Right ventricle myocardium inferior (tissue), 1 donor: ENCODE measurements at regions of chr1 and their contacts with region 1.

Region 1: GRCh38 chr1:2786329-2787162 is 14.9 kb downstream of the TTC34 start:
- DNase-seq: peak; percentile 75
- ATAC-seq: no peak

Region 2: GRCh38 chr1:2556277-2556677 is 230.3 kb before region 1 on chr1 and contains the start of gene TNFRSF14:
- intact Hi-C with region 1: loop called (anchors 5 kb)
- DNase-seq: peak; percentile 82
- ATAC-seq: peak; percentile 51
- total RNA-seq, gene TNFRSF14: 15.7 TPM